ENCODE measurements at regions of chrX and their contacts with region 1.

Region 1: GRCh38 chrX:70133303-70134115 is at the start of gene IGBP1:
- DNase-seq: peak; percentile 83
- H3K4me3 Mint-ChIP-seq: peak within 1 kb of the TSS; percentile 96
- H3K27ac Mint-ChIP-seq: peak within 1 kb of the TSS; percentile 96
- H3K4me1 Mint-ChIP-seq: peaks cover 7% of the 10 kb centered on the region
- H3K27me3 Mint-ChIP-seq: peaks cover 25% of the 10 kb centered on the region
- CTCF ChIP-seq: peak; percentile 51
- total RNA-seq, gene IGBP1: 31.9 and 36.3 TPM in 2 replicates

Region 2: GRCh38 chrX:69538321-69538876 is 595.1 kb before region 1 on chrX:
- CTCF ChIA-PET with region 1: interaction called, 10 read pairs
- POLR2A ChIA-PET with region 1: no interaction called
- intact Hi-C with region 1: no loop called
- DNase-seq: peak; percentile 63
- H3K4me3 Mint-ChIP-seq: peak overlapping the region; percentile 56
- H3K27ac Mint-ChIP-seq: peak overlapping the region; percentile 36
- H3K4me1 Mint-ChIP-seq: no peaks in the 10 kb centered on the region
- H3K27me3 Mint-ChIP-seq: peaks cover 31% of the 10 kb centered on the region
- CTCF ChIP-seq: peak; percentile 79

Region 3: GRCh38 chrX:70087857-70088630 is 45.5 kb before region 1 on chrX:
- CTCF ChIA-PET with region 1: no interaction called
- POLR2A ChIA-PET with region 1: no interaction called
- intact Hi-C with region 1: no loop called
- DNase-seq: peak; percentile 33
- H3K4me3 Mint-ChIP-seq: no peak overlapping the region
- H3K27ac Mint-ChIP-seq: no peak overlapping the region
- H3K4me1 Mint-ChIP-seq: no peaks in the 10 kb centered on the region
- H3K27me3 Mint-ChIP-seq: peaks cover 38% of the 10 kb centered on the region
- CTCF ChIP-seq: no peak

Region 4: DNA sequence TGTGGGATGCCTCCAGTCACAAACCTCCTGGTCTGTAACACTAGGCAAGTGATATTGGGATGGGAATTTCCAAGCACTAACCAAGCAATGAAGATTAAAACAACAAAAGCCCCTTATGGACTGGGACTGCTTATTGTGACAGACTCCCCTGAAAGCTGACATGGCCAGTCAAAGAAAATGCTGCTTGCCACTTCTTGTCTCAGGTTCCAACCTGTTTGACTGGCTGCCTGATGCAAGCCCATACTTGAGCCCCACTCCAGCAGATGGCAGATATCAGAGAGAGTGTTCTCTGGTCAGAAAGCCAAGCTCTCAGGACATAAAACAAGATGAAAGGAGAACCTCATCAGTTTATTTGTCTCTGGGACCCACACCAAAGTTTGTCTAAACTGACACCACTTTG is 15.8 kb before region 1 on chrX:
- CTCF ChIA-PET with region 1: no interaction called
- POLR2A ChIA-PET with region 1: no interaction called
- intact Hi-C with region 1: no loop called
- DNase-seq: no peak
- H3K4me3 Mint-ChIP-seq: no peak overlapping the region
- H3K27ac Mint-ChIP-seq: no peak overlapping the region
- H3K4me1 Mint-ChIP-seq: no peaks in the 10 kb centered on the region
- H3K27me3 Mint-ChIP-seq: peaks cover 14% of the 10 kb centered on the region
- CTCF ChIP-seq: no peak

Region 5: GRCh38 chrX:70262952-70263567 is 129.6 kb after region 1 on chrX:
- CTCF ChIA-PET with region 1: interaction called, 4 read pairs
- POLR2A ChIA-PET with region 1: interaction called, 3 read pairs
- intact Hi-C with region 1: loop called (anchors 2 kb)
- DNase-seq: peak; percentile 49
- H3K4me3 Mint-ChIP-seq: no peak overlapping the region
- H3K27ac Mint-ChIP-seq: no peak overlapping the region
- H3K4me1 Mint-ChIP-seq: no peaks in the 10 kb centered on the region
- H3K27me3 Mint-ChIP-seq: peaks cover 13% of the 10 kb centered on the region
- CTCF ChIP-seq: peak; percentile 61

Region 6: DNA sequence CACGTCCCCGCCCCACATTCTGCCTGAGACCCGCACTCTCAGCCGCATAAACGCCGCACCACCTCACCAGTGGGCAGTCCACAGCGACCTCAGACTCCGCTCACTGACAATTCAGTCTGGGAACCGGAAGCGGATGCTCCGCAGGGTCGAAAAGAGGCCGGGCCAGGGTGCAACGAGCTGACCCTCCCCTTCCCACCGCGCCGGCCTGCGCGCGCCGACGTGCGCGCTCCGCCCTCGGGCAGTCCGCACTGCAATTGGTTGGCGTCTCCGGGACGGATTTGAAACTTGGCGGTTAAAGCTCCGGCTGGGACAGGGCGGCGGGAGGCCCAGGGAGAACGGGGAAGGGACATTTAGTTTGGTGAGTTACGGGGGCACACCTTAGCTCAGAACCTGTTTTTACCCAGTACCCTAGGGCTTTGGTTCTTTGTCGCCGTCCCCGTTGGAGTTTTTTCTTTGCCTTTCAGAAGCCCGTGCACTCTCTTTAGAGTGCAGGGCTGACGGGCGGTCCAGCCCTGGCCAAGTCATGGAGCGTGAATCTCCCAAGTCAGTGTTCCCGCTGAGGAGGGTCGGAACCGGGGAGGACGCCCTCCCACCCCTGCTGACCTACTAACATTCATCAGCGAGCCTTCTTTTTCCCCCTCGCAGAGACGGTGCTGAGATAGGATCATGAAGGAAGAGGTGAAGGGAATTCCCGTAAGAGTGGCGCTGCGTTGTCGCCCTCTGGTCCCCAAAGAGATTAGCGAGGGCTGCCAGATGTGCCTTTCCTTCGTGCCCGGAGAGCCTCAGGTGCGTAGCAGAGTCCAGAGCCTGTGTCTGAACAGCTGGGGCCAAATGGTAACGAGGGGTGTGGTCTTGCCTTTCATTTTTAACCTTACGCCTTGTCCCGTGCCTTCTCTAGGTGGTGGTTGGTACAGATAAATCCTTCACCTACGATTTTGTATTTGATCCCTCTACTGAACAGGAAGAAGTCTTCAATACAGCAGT is 156.6 kb after region 1 on chrX and contains the starts of genes KIF4A and PDZD11:
- CTCF ChIA-PET with region 1: no interaction called
- POLR2A ChIA-PET with region 1: interaction called, 14 read pairs
- intact Hi-C with region 1: no loop called
- DNase-seq: peak; percentile 77
- H3K4me3 Mint-ChIP-seq: peak within 1 kb of the TSS; percentile 84
- H3K27ac Mint-ChIP-seq: peak within 1 kb of the TSS; percentile 53
- H3K4me1 Mint-ChIP-seq: peaks cover 6% of the 10 kb centered on the region
- H3K27me3 Mint-ChIP-seq: peaks cover 29% of the 10 kb centered on the region
- CTCF ChIP-seq: no peak
- total RNA-seq, gene KIF4A: 13.6 and 19.0 TPM in 2 replicates
- total RNA-seq, gene PDZD11: 51.9 and 57.2 TPM in 2 replicates

Region 7: GRCh38 chrX:70433848-70434351 is 300.4 kb after region 1 on chrX:
- CTCF ChIA-PET with region 1: interaction called, 5 read pairs
- POLR2A ChIA-PET with region 1: no interaction called
- intact Hi-C with region 1: loop called (anchors 10 kb)
- DNase-seq: peak; percentile 55
- H3K4me3 Mint-ChIP-seq: peak overlapping the region; percentile 80
- H3K27ac Mint-ChIP-seq: peak overlapping the region; percentile 78
- H3K4me1 Mint-ChIP-seq: peaks cover 10% of the 10 kb centered on the region
- H3K27me3 Mint-ChIP-seq: peaks cover 61% of the 10 kb centered on the region
- CTCF ChIP-seq: peak; percentile 44